ENCODE measurements at regions of chr20 and their contacts with region 1.

Region 1: DNA sequence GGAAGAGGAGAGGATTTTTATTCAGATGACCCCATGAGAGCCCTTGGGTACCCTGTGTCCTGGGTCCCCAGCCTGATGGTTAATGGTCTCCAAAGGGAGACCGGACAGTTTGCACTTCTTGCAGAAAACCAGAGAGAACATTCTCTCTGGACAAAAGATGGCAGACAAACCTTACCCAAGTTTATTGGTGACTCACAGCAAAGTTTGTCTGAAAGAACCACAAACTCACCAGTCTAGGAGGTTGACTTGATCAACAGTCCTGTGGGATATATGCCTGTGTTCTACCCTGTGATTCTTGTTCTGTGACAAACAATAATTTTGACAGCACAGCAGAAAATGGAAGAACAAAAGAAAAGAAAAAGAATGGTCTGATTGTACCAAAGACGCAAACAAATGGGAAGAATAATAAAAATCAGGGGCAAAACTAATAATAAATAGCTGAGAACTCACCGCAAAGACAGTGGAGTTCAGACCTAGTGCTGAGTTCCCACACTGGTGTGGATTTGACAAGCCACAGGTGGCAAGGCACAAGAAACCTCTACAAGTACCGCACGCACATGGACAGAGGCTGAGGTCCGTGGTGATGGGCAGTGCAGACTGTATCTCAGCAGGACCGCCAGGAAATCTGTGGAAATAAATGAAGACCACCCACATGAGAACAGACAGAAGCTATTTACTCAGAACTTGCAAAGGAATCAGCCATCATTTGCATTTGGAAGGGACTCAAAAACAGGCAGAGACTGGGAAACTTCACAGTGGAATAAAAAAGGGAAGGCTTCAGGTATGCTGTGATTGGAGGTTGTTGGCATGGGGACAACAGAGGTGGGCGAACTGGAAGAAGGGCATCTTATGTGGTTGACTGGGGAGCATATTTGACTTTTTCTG is 246.2 kb upstream of the RNF24 start:
- DNase-seq: peak; percentile 49
- H3K4me3 ChIP-seq: no peak overlapping the region
- H3K27ac ChIP-seq: no peak overlapping the region
- H3K4me1 ChIP-seq: no peaks in the 10 kb centered on the region
- H3K27me3 ChIP-seq: no peaks in the 10 kb centered on the region
- CTCF ChIP-seq: peak in 1 of 2 donors; percentile 44

Region 2: DNA sequence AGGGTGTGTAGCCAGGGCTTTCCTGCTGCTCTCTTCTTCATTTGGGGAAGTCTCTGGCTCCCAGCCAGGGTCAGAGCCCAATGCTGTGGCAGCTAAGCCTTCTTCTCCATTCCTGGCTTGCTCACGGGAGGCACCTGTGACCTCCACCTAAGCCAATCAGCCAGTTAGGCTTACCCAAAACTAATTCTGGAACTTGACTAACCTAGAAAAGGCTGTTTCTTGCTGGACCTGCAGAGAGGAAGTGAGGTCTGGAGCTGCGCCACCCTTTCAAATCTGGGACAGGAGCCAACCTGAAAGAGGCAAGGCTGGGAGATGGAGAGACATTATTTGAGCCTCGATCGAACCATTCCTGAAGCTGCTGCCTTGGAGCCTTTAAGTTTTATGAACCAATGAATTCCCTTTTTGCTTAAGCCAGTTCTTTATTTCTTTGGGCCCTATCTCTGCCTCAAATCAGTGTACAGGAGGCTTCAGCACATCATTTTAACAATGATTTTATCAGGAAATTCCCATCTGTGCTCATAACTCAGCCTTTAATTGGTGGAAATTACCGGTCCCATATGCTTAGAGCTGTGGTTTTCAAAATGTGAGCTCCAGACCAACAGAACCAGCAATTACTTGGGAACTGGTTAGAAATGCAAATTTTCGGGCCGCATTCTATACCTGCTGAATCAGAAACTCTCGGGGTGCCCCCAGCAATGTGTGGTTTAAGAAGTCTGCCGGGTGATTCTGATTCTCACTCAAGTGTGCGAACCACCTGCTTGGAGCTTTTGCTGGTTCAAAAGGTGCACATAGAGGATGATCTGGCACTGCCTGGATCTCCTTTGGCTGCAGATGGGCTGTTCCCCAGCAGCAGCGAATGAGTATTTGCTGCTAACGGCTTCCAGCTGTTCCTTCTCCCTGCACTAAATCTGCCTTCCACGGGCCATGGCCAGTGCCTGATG is 148.8 kb before region 1 on chr20:
- CTCF ChIA-PET with region 1: no interaction called
- dilution Hi-C with region 1: no loop called
- in situ Hi-C with region 1: no loop called
- intact Hi-C with region 1: no loop called
- DNase-seq: peak; percentile 51
- H3K4me3 ChIP-seq: no peak overlapping the region
- H3K27ac ChIP-seq: no peak overlapping the region
- H3K4me1 ChIP-seq: peaks cover 9% of the 10 kb centered on the region
- H3K27me3 ChIP-seq: no peaks in the 10 kb centered on the region
- CTCF ChIP-seq: no peak

Region 3: DNA sequence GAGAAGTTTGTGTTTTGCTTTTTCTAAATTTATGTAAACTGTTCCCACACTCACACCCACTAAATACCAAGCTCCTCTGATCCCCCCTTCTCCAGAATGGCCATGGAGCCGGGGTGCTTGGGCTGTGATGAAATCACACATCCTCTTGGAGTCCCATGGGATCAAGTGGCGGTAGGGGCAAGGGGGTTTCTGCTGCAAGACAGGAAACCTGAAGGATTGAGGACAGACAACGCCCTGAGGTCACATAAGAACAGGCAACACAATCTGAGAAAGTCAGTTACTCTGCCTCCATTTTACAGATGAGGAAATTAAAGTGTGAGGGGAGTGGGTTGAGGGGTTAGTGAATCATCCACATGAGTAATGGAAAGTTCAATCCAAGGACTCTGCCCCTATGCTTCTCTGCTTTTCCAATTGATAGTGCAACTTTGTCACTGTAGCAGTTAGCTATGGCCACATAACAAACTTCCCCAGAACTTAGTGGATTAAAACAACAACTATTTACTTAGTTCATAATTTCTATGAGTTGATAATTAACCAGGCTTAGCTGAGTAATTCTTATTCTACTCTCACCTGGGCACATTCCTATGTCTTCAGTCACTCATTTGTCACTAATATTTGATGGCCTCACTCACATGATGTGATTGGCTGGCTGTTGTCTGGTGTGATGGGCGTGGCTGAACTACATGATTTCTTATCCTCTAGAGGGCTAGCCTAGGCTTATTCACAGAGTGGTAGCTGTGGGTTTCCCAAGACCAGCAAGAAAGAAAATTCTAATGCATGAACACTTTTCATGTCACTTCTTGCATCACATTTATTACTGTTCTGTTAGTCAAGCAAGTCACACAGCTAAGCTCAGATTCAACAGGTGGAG is 64.9 kb after region 1 on chr20:
- CTCF ChIA-PET with region 1: no interaction called
- dilution Hi-C with region 1: no loop called
- in situ Hi-C with region 1: no loop called
- intact Hi-C with region 1: loop called (anchors 5 kb)
- DNase-seq: peak; percentile 82
- H3K4me3 ChIP-seq: no peak overlapping the region
- H3K27ac ChIP-seq: peak overlapping the region; percentile 13
- H3K4me1 ChIP-seq: peaks cover 10% of the 10 kb centered on the region
- H3K27me3 ChIP-seq: no peaks in the 10 kb centered on the region
- CTCF ChIP-seq: peak; percentile 13 to 15

Region 4: DNA sequence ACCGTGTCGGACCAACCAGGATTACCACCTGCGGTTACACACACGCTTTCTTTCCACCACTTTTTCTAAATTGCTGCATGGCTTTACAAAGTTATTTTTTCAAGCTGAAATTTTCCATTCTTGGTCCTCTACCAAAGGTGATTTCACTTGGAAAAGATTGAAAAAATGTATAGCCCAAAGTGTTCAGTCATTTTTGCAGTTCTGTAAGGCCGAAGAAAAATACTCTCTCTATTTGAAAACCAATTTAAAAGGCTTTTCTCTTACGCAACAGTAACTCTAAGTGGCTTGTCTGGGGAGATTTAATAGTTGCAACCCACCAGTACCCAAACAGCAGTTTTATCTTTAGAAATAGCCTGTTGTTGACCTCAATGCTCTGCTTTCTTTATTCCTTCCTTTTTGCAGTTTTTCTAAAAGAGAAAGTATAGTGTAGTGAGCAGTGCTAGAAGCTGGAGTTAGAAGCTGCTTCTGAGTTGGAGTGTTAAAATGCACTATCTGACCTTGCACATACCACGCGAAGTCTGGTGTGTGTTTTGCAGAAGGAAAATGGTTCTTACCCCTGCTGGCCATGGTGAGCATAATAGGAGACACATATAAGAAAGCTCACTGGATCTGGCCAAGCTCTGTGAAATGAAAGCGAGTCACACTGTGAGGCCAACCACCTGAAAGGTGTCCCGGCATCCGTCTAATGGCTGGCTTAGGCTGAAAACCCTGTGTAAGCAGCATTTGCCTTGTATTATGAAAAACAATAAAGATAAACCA is 188.6 kb after region 1 on chr20:
- CTCF ChIA-PET with region 1: no interaction called
- dilution Hi-C with region 1: no loop called
- in situ Hi-C with region 1: no loop called
- intact Hi-C with region 1: loop called (anchors 2 kb)
- DNase-seq: peak; percentile 72
- H3K4me3 ChIP-seq: peak overlapping the region in 1 of 3 experiments; percentile 2
- H3K27ac ChIP-seq: peak overlapping the region; percentile 9
- H3K4me1 ChIP-seq: peaks cover 40% of the 10 kb centered on the region
- H3K27me3 ChIP-seq: no peaks in the 10 kb centered on the region
- CTCF ChIP-seq: peak; percentile 41 to 49

Region 5: DNA sequence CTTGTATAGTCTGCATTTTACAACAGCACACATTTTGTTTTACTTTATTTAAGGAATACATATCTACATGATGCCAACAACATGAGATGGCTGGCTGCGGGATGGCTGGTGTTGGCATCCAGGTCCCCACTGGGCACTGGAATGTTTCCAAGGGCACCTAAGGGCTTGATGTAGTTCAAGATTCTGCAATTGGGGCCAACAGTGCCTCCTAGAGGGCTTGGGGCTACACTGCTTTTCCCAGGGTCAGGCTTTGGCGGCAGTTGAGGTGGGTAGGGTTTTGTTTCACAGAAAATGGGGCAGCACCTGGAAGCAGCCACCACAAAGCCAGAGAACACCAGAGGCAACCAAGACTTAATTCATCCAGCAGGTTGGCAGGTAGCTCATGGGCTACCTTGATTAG is 258.0 kb after region 1 on chr20:
- CTCF ChIA-PET with region 1: no interaction called
- dilution Hi-C with region 1: no loop called
- in situ Hi-C with region 1: no loop called
- intact Hi-C with region 1: loop called (anchors 5 kb)
- DNase-seq: peak; percentile 11
- H3K4me3 ChIP-seq: no peak overlapping the region
- H3K27ac ChIP-seq: no peak overlapping the region
- H3K4me1 ChIP-seq: peaks cover 4% of the 10 kb centered on the region
- H3K27me3 ChIP-seq: no peaks in the 10 kb centered on the region
- CTCF ChIP-seq: peak; percentile 66 to 68

Region 6: GRCh38 chr20:4563534-4563933 is 302.0 kb after region 1 on chr20:
- CTCF ChIA-PET with region 1: no interaction called
- dilution Hi-C with region 1: loop called (anchors 10 kb)
- in situ Hi-C with region 1: no loop called
- intact Hi-C with region 1: no loop called
- DNase-seq: peak; percentile 68
- H3K4me3 ChIP-seq: no peak overlapping the region
- H3K27ac ChIP-seq: no peak overlapping the region
- H3K4me1 ChIP-seq: peaks cover 3% of the 10 kb centered on the region
- H3K27me3 ChIP-seq: no peaks in the 10 kb centered on the region
- CTCF ChIP-seq: peak; percentile 51

Region 7: DNA sequence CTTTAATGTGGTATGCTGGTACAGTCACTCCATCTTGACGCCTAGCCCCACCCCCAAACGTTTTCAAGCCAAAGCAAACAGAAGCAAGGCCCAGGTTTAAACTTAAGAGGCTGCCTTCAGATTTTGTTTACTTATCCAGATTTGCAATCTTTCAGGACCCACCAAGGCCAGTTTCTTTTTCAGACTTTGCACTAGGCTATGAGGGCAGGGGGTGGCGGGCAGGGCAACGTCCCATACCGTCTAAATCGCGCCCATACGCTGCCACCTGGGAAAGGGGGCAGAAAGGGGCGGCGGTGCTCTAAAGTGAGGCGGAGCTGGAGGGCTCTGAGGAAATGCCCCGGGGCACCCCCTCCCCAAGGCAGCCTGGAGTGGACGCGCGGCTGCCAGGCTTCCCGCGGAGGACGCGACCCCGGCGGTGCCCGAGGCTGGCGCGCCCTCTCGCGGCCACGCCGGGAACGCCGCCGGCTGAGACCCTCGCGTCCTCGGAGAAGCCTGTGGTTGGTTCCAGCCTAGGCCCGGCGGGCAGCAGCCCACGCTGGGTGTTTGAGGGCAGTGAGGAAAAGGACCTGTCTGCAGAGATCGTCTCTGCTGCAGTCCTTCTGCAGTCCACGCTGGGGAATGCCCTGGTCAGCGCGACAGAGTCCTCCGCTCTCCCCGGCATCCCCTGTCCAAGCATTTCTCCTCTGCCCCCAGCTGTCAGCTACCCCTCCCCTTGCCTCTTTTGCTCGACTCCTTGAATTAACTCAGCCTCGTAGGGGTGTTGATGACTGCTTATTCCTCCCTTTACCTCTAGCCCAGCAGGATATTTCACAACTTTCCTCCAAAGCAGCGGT is 331.0 kb after region 1 on chr20:
- CTCF ChIA-PET with region 1: interaction called, 3 read pairs
- dilution Hi-C with region 1: no loop called
- in situ Hi-C with region 1: no loop called
- intact Hi-C with region 1: loop called (anchors 1 kb)
- DNase-seq: peak; percentile 22
- H3K4me3 ChIP-seq: peak overlapping the region in 2 of 3 experiments; percentile 26 to 27
- H3K27ac ChIP-seq: no peak overlapping the region
- H3K4me1 ChIP-seq: peaks cover 7% of the 10 kb centered on the region
- H3K27me3 ChIP-seq: no peaks in the 10 kb centered on the region
- CTCF ChIP-seq: peak; percentile 82 to 83